ENCODE measurements at regions of chr16 and their contacts with region 1.

Region 1: GRCh38 chr16:740764-741505 is at the start of gene CIAO3:
- DNase-seq: peak; percentile 95
- ATAC-seq: peak; percentile 88
- H3K4me3 ChIP-seq: peak within 1 kb of the TSS; percentile 21 to 94 (median 81)
- H3K4me3 Mint-ChIP-seq: peak within 1 kb of the TSS; percentile 82
- H3K27ac ChIP-seq: peak within 1 kb of the TSS; percentile 86 to 94
- H3K27ac Mint-ChIP-seq: peak within 1 kb of the TSS; percentile 83
- H3K4me1 ChIP-seq: peaks cover 20 to 36% of the 10 kb centered on the region in 2 donors
- H3K4me1 Mint-ChIP-seq: peaks cover 18% of the 10 kb centered on the region
- H3K27me3 ChIP-seq: no peaks in the 10 kb centered on the region
- H3K27me3 Mint-ChIP-seq: no peaks in the 10 kb centered on the region
- CTCF ChIP-seq: peak; percentile 97
- total RNA-seq, gene CIAO3: 59.4 and 67.6 TPM in 2 replicates

Region 2: DNA sequence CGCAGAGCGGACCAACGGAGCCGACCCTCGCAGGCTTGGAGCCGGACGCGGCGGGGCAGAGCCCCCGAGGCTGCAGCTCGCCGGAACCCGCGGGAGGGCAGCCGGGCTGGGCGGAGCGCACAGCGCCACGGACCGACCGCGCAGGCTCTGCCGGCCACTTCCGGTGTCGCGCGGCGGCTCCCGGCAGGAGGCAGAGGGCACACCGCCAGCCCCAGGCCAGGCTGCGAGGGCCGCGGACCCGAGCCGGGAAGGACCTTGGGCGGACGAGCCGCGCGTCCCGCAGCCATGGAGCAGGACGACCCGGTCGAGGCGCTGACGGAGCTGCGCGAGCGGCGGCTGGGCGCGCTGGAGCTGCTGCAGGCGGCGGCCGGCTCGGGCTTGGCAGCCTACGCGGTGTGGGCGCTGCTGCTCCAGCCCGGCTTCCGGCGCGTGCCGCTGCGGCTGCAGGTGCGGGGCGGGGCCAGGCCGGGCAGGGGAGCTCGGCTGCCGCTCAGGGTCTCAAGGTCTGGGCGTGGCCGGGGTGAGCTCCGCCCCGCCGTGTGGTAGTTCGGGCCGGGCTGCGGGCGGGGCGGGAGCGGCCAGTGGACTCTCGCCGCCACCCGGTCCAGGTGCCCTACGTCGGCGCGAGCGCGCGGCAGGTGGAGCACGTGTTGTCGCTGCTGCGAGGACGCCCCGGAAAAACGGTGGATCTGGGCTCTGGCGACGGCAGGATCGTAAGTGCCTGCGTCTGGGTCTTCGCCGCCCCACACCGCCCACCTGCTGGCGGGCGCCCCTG is 19.8 kb before region 1 on chr16 and contains the start of gene ANTKMT:
- CTCF ChIA-PET with region 1: interaction called, 26 read pairs
- POLR2A ChIA-PET with region 1: interaction called, 9 read pairs
- intact Hi-C with region 1: no loop called
- DNase-seq: peak; percentile 92
- ATAC-seq: peak; percentile 86
- H3K4me3 ChIP-seq: peak within 1 kb of the TSS; percentile 34 to 76 (median 73)
- H3K4me3 Mint-ChIP-seq: peak within 1 kb of the TSS; percentile 84
- H3K27ac ChIP-seq: peak within 1 kb of the TSS; percentile 54 to 86
- H3K27ac Mint-ChIP-seq: peak within 1 kb of the TSS; percentile 80
- H3K4me1 ChIP-seq: peaks cover 21 to 38% of the 10 kb centered on the region in 2 donors
- H3K4me1 Mint-ChIP-seq: peaks cover 21% of the 10 kb centered on the region
- H3K27me3 ChIP-seq: peaks cover 0 to 6% (median 3%) of the 10 kb centered on the region in 4 experiments
- H3K27me3 Mint-ChIP-seq: no peaks in the 10 kb centered on the region
- CTCF ChIP-seq: no peak
- total RNA-seq, gene ANTKMT: 41.0 and 53.6 TPM in 2 replicates

Region 3: DNA sequence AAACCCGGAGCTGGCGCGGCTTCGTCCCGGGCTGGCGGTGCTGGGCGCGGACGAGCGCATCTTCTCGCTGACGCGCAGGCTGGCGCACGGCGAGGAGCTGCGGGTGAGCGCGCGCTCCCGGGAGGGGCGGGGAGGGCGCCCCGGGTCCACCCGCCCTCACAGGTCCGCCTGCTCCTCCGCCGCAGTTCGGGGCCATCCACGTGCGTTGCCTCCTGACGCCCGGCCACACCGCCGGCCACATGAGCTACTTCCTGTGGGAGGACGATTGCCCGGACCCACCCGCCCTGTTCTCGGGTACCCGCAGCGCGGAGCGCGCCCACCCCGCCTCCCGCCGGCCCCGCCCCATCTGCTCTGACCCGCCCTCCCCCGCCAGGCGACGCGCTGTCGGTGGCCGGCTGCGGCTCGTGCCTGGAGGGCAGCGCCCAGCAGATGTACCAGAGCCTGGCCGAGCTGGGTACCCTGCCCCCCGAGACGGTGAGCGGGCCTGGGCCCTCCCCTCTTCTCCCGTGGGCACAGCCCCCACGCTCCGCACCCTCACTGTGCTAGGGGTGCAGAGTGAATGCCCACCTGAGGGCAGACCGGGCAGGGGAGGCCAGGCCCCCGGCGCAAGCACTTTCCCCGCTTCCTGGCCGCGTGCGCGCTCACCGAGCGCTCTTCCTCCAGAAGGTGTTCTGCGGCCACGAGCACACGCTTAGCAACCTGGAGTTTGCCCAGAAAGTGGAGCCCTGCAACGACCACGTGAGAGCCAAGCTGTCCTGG is 12.6 kb before region 1 on chr16:
- CTCF ChIA-PET with region 1: interaction called, 3 read pairs
- POLR2A ChIA-PET with region 1: interaction called, 11 read pairs
- intact Hi-C with region 1: loop called (anchors 1 kb)
- DNase-seq: peak; percentile 88
- ATAC-seq: peak; percentile 52
- H3K4me3 ChIP-seq: peak overlapping the region in 4 of 5 experiments; percentile 69 to 81 (median 74)
- H3K4me3 Mint-ChIP-seq: peak overlapping the region; percentile 73
- H3K27ac ChIP-seq: no peak overlapping the region
- H3K27ac Mint-ChIP-seq: peak overlapping the region; percentile 26
- H3K4me1 ChIP-seq: peaks cover 10 to 28% of the 10 kb centered on the region in 2 donors
- H3K4me1 Mint-ChIP-seq: peaks cover 16% of the 10 kb centered on the region
- H3K27me3 ChIP-seq: no peaks in the 10 kb centered on the region
- H3K27me3 Mint-ChIP-seq: no peaks in the 10 kb centered on the region
- CTCF ChIP-seq: no peak